A549 (cell line): ENCODE measurements at regions of chr17 and their contacts with region 1.

Region 1: GRCh38 chr17:75667021-75667790 is at the starts of genes RECQL5 and SAP30BP:
- DNase-seq: peak; percentile 95 to 99
- ATAC-seq: peak; percentile 98 to 100
- H3K4me3 ChIP-seq: peak within 1 kb of the TSS; percentile 72
- H3K27ac ChIP-seq: peak within 1 kb of the TSS; percentile 81 to 91
- H3K4me1 ChIP-seq: peaks cover 16% of the 10 kb centered on the region
- CTCF ChIP-seq: no peak
- EP300 ChIP-seq: no peak
- POLR2A ChIP-seq: peak; percentile 55; the same call in 1 of the 2 replicates
- RAD21 ChIP-seq: no peak; a peak in 1 of 5 replicates
- polyA plus RNA-seq, gene RECQL5: 22.7 and 29.2 TPM in 2 replicates
- polyA plus RNA-seq, gene SAP30BP: 76.3 and 103 TPM in 2 replicates

Region 2: GRCh38 chr17:75571197-75571873 is 95.9 kb before region 1 on chr17:
- CTCF ChIA-PET with region 1: no interaction called
- POLR2A ChIA-PET with region 1: no interaction called
- DNase-seq: no peak
- ATAC-seq: peak in 1 of 2 experiments; percentile 34; a peak in 3 of 6 replicates
- H3K4me3 ChIP-seq: no peak overlapping the region
- H3K27ac ChIP-seq: peak overlapping the region in 1 of 2 experiments; percentile 0; a peak in 1 of 6 replicates
- H3K4me1 ChIP-seq: no peaks in the 10 kb centered on the region
- CTCF ChIP-seq: no peak
- EP300 ChIP-seq: no peak
- POLR2A ChIP-seq: no peak
- RAD21 ChIP-seq: no peak

Region 3: GRCh38 chr17:75764711-75765421 is 97.7 kb after region 1 on chr17 and contains the start of gene GALK1:
- CTCF ChIA-PET with region 1: interaction called, 1,931 read pairs
- POLR2A ChIA-PET with region 1: no interaction called
- DNase-seq: peak; percentile 78 to 81
- ATAC-seq: peak; percentile 89 to 91
- H3K4me3 ChIP-seq: peak within 1 kb of the TSS; percentile 68
- H3K27ac ChIP-seq: peak within 1 kb of the TSS; percentile 83 to 92
- H3K4me1 ChIP-seq: peaks cover 13% of the 10 kb centered on the region
- CTCF ChIP-seq: peak; percentile 65
- EP300 ChIP-seq: no peak
- POLR2A ChIP-seq: peak; percentile 71
- RAD21 ChIP-seq: peak; percentile 59 to 66
- polyA plus RNA-seq, gene GALK1: 20.7 and 21.3 TPM in 2 replicates